Common myeloid progenitor, CD34-positive (primary cell): ENCODE measurements at regions of chr14 and their contacts with region 1.

Region 1: DNA sequence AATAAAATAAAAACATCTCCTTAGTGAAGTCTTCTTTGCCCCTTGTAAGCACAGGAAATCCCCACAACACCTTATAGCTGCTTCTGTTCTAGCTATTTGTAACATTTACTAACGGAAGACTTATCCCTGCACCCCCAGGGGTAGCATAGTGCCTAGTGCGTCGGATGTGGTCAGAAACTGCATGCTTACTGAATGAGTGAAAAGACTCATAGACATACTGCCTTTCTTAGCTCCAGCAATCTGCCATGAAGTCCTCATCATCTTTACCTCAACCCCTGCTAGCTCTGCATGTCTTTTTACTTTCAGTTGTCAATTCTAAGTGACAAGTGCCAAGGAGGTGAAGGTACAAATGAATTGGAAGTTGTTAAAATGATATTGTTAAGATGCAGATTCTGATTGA is 12.9 kb downstream of the RIOX1 start:
- DNase-seq: no peak
- H3K4me3 ChIP-seq: no peak overlapping the region
- H3K27ac ChIP-seq: no peak overlapping the region
- H3K4me1 ChIP-seq: no peaks in the 10 kb centered on the region
- H3K27me3 ChIP-seq: no peaks in the 10 kb centered on the region

Region 2: DNA sequence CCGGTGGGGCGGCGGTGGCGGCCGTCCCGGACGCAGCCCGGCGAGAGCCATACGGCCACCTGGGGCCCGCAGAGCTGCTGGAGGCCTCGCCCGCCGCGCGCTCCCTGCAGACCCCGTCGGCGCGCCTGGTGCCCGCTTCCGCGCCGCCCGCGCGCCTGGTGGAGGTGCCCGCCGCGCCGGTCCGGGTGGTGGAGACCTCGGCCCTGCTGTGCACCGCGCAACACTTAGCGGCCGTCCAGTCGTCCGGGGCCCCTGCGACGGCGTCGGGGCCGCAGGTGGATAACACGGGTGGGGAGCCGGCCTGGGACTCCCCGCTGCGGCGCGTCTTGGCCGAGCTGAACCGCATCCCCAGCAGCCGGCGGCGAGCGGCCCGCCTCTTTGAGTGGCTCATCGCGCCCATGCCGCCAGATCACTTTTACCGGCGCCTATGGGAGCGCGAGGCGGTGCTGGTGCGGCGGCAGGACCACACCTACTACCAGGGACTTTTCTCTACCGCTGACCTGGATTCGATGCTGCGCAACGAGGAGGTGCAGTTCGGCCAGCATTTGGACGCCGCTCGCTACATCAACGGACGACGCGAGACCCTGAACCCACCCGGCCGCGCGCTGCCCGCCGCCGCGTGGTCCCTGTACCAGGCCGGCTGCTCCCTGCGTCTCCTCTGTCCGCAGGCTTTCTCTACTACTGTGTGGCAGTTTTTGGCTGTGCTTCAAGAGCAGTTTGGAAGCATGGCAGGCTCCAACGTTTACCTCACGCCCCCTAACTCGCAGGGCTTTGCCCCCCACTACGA is 12.2 kb before region 1 on chr14:
- CTCF ChIA-PET with region 1: interaction called, 10 read pairs
- POLR2A ChIA-PET with region 1: no interaction called
- DNase-seq: peak; percentile 34 to 75 (median 71)
- H3K4me3 ChIP-seq: peak overlapping the region; percentile 50 to 83 (median 81)
- H3K27ac ChIP-seq: peak overlapping the region; percentile 40 to 58
- H3K4me1 ChIP-seq: peaks cover 7 to 30% (median 25%) of the 10 kb centered on the region in 4 experiments
- H3K27me3 ChIP-seq: peaks cover 0 to 3% (median 0%) of the 10 kb centered on the region in 5 experiments

Region 3: GRCh38 chr14:73521229-73521628 is 17.6 kb after region 1 on chr14:
- CTCF ChIA-PET with region 1: interaction called, 22 read pairs
- POLR2A ChIA-PET with region 1: interaction called, 3 read pairs
- DNase-seq: no peak
- H3K4me3 ChIP-seq: no peak overlapping the region
- H3K27ac ChIP-seq: no peak overlapping the region
- H3K4me1 ChIP-seq: no peaks in the 10 kb centered on the region
- H3K27me3 ChIP-seq: no peaks in the 10 kb centered on the region

Region 4: GRCh38 chr14:73526569-73526968 is 22.9 kb after region 1 on chr14:
- CTCF ChIA-PET with region 1: interaction called, 17 read pairs
- POLR2A ChIA-PET with region 1: no interaction called
- DNase-seq: no peak
- H3K4me3 ChIP-seq: no peak overlapping the region
- H3K27ac ChIP-seq: no peak overlapping the region
- H3K4me1 ChIP-seq: no peaks in the 10 kb centered on the region
- H3K27me3 ChIP-seq: no peaks in the 10 kb centered on the region

Region 5: DNA sequence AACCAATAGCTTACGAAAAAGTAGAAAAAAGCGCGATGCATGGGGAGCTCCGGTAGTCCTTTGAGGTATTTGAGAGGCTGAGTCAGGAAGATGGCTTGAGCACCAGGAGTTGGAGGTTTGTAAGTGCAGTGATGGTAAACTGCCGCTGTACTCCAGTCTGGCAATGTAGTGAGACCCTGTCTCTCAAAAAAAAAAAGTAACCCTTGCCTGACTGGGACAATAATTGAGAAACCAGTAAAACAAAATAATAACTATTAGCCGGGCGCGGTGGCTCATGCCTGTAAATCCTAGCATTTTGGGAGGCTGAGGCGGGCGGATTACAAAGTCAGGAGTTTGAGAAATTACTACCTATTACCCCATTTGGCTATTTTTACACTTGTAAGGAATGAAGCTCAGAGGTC is 64.7 kb after region 1 on chr14:
- CTCF ChIA-PET with region 1: interaction called, 10 read pairs
- POLR2A ChIA-PET with region 1: no interaction called
- DNase-seq: no peak
- H3K4me3 ChIP-seq: peak overlapping the region in 3 of 7 experiments; percentile 73 to 78 (median 77)
- H3K27ac ChIP-seq: peak overlapping the region in 1 of 2 experiments; percentile 66
- H3K4me1 ChIP-seq: peaks cover 0 to 26% (median 14%) of the 10 kb centered on the region in 4 experiments
- H3K27me3 ChIP-seq: no peaks in the 10 kb centered on the region

Region 6: DNA sequence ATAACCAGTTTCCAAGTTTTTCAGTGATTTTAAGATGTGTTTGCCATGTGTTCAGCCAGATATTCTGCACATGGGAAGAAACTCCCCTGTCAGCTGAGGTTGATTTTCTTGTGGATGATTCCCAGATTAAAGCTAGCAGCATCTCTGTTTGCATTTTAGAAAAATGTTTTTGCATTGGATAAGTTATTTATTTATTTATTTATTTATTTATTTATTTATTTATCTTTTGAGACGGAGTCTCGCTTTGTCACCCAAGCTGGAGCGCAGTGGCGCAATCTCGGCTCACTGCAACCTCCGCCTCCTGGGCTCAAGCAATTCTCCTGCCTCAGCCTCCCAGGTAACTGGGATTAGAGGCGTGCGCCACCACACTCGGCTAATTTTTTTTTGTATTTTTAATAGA is 90.8 kb after region 1 on chr14:
- CTCF ChIA-PET with region 1: no interaction called
- POLR2A ChIA-PET with region 1: no interaction called
- DNase-seq: no peak
- H3K4me3 ChIP-seq: no peak overlapping the region
- H3K27ac ChIP-seq: no peak overlapping the region
- H3K4me1 ChIP-seq: peaks cover 0 to 8% (median 3%) of the 10 kb centered on the region in 4 experiments
- H3K27me3 ChIP-seq: peaks cover 0 to 2% (median 0%) of the 10 kb centered on the region in 5 experiments

Region 7: GRCh38 chr14:73633116-73634010 is 129.7 kb after region 1 on chr14:
- CTCF ChIA-PET with region 1: interaction called, 45 read pairs
- POLR2A ChIA-PET with region 1: interaction called, 4 read pairs
- DNase-seq: peak; percentile 80 to 84 (median 82)
- H3K4me3 ChIP-seq: peak overlapping the region; percentile 27 to 80 (median 68)
- H3K27ac ChIP-seq: no peak overlapping the region
- H3K4me1 ChIP-seq: peaks cover 0 to 18% (median 9%) of the 10 kb centered on the region in 4 experiments
- H3K27me3 ChIP-seq: peaks cover 0 to 3% (median 0%) of the 10 kb centered on the region in 5 experiments